HEK293 (cell line): ENCODE measurements at regions of chr17 and their contacts with region 1.

Region 1: DNA sequence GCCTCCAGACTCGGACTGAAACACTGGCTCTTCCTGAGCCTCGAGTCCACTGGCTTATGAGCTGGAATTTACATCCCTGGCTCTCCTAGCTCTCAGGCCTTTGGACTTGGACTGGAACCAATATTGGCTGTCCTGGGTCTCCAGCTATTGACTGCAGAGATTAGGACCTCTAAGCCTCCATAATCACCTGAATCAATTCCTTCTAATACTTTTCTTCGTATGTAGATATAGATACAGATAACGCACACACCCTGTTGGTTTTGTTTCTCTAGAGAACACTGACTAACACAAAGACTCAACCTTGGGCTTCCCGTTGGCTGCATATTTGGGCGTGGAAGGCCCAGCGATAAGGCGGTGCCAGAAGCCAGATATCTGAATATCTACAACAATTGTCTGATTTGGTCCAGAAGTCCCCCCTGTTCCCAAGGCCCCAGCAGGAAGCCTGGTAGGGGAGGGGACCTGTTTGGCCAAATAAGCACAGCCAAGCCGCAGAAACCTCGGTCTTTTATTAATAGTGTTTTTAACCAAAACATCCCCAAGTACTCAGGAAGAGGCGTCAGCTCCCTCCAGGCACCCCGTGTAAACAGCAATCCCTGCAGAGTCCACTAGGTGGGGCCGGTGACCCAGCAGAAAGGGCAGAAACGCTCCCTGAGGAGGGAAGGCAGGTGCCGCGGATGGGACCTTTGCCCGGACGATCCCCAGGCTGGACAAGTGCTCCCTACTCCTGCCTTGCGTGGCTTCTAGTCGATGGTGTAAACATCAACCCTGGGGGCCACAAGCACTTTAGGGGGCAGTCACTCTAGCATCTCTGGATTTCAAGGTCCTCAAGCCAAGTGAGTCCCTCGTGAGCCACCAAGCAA is 57.0 kb downstream of the ABR start:
- H3K4me3 ChIP-seq: no peak overlapping the region
- H3K27ac ChIP-seq: no peak overlapping the region
- H3K4me1 ChIP-seq: no peaks in the 10 kb centered on the region; the same call in 1 of the 2 replicates
- CTCF ChIP-seq: peak; percentile 83

Region 2: DNA sequence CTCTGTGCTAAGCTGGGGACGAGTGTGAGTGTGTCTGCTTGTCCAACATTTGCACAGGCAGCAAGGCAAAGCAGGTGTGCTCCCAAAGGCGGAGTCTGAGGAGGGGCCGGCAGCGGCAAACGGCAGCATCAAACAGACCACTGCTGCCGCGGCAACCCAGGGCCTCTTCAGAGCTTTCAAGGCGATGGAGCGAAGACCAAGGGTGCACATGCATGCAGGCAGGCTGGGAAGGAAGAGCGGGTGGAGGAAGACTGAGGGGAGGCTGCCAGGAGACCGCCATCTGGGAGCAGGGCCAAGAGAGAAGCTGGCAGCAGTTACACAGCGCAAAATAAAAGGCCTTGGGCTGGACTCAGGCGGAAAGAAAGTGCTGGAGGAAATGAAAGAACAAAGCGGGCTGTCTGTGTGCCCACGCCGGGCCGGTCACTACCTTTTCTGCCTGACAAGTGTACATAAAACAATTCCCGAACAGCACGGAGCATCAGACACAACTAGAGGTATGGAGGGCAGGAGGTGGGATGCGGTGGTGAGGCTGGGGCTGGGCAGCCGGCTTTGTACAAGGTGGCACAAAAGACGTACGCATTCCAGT is 117.3 kb before region 1 on chr17:
- CTCF ChIA-PET with region 1: no interaction called
- POLR2A ChIA-PET with region 1: no interaction called
- H3K4me3 ChIP-seq: no peak overlapping the region
- H3K27ac ChIP-seq: peak overlapping the region; percentile 37; the same call in 1 of the 2 replicates
- H3K4me1 ChIP-seq: peaks cover 4% of the 10 kb centered on the region; the same call in 1 of the 2 replicates
- CTCF ChIP-seq: no peak

Region 3: DNA sequence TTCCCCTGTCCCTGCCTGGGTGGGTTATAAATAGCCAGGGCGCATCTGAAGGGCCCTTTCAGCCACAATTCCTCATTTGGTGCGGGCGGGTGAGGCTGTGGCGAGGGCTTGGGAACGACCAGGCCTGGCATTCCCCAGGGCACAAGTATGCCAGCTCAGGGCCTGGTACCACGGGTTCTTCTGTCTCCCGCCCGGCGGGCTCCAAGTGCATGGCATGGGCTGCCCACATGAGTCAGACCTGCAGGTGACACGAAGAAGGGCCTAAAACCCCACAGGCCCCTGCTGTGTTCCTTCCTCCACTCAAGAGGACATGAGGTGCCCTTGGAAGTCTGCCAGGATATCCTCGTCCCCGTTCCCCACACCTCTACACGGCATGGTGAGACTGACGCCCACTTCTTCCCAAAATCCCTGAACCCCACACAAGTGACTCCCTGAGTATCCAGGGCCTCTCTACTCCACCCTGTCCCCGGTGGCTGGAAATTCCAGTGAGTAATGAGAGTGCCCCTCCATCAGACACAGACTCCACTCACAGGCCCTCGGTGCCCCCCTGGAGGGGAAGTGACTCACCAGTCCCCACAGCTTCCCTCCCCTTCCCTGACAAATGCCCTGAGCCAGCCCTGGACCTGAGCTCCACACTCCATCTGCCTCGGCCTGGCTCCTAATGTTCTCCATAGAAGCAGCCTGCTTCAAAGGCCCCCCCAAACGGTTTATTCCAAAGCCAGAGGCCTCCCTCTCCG is 11.7 kb before region 1 on chr17:
- CTCF ChIA-PET with region 1: interaction called, 25 read pairs
- POLR2A ChIA-PET with region 1: no interaction called
- H3K4me3 ChIP-seq: no peak overlapping the region
- H3K27ac ChIP-seq: peak overlapping the region; percentile 94
- H3K4me1 ChIP-seq: peaks cover 43% of the 10 kb centered on the region
- CTCF ChIP-seq: no peak

Region 4: GRCh38 chr17:1137465-1137894 is 14.7 kb after region 1 on chr17:
- CTCF ChIA-PET with region 1: interaction called, 18 read pairs
- POLR2A ChIA-PET with region 1: no interaction called
- H3K4me3 ChIP-seq: no peak overlapping the region
- H3K27ac ChIP-seq: no peak overlapping the region
- H3K4me1 ChIP-seq: peaks cover 7% of the 10 kb centered on the region
- CTCF ChIP-seq: no peak

Region 5: GRCh38 chr17:1147661-1148060 is 24.9 kb after region 1 on chr17:
- CTCF ChIA-PET with region 1: interaction called, 114 read pairs
- POLR2A ChIA-PET with region 1: no interaction called
- H3K4me3 ChIP-seq: no peak overlapping the region
- H3K27ac ChIP-seq: no peak overlapping the region
- H3K4me1 ChIP-seq: peaks cover 8% of the 10 kb centered on the region
- CTCF ChIP-seq: peak; percentile 79; the same call in 1 of the 2 replicates